Caco-2 (cell line): ENCODE measurements at regions of chr18 and their contacts with region 1.

Region 1: DNA sequence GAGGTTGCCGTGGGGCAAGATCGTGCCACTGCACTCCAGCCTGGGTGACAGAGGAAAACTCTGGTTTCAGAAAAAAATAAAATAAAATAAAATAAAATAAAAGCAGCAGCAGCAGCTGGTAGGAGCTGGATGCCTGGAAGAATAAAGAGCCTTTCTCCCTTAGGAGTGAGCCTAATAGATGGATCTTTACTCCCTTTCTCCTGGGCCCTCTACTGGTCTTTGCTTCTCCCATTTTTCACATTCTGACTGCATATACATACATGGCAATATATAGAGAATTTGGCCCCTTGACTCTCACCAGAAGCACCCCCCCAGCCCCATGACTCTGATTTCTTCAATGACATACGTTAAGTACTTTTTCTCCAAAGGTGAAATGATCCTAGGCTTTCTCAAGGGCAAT is 9.8 kb upstream of the MALT1 start:
- DNase-seq: peak in 1 of 2 experiments; percentile 9
- H3K4me3 ChIP-seq: no peak overlapping the region
- H3K4me3 Mint-ChIP-seq: no peak overlapping the region
- H3K27ac Mint-ChIP-seq: no peak overlapping the region
- H3K4me1 ChIP-seq: no peaks in the 10 kb centered on the region
- H3K4me1 Mint-ChIP-seq: peaks cover 9% of the 10 kb centered on the region
- H3K27me3 ChIP-seq: no peaks in the 10 kb centered on the region
- H3K27me3 Mint-ChIP-seq: no peaks in the 10 kb centered on the region
- CTCF ChIP-seq: peak; percentile 13 to 26

Region 2: DNA sequence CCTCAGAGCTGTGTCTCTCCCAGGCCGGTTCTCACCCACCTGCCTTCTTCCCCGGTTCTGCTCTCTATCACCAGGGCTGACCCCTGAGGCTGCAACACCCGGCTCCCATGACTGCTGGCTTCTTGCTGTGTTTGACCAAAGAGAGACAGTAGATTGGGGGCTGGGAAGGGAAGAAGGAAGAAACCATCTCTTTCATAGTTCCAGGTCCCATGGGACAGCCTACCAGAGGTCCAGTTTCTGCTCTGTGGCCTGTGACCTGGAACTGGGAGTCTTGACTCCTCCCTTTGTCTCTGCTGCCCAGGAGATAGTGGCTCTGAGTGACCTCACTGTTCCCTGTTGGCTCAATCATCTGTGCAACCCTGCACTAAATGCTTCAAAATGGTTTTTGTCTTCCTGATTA is 70.6 kb before region 1 on chr18:
- CTCF ChIA-PET with region 1: no interaction called
- POLR2A ChIA-PET with region 1: interaction called, 11 read pairs
- intact Hi-C with region 1: no loop called
- DNase-seq: peak in 1 of 2 experiments; percentile 1
- H3K4me3 ChIP-seq: no peak overlapping the region
- H3K4me3 Mint-ChIP-seq: no peak overlapping the region
- H3K27ac Mint-ChIP-seq: peak overlapping the region; percentile 76
- H3K4me1 ChIP-seq: peaks cover 19% of the 10 kb centered on the region
- H3K4me1 Mint-ChIP-seq: peaks cover 6% of the 10 kb centered on the region
- H3K27me3 ChIP-seq: no peaks in the 10 kb centered on the region
- H3K27me3 Mint-ChIP-seq: no peaks in the 10 kb centered on the region
- CTCF ChIP-seq: no peak

Region 3: GRCh38 chr18:58631301-58631700 is 30.1 kb before region 1 on chr18:
- CTCF ChIA-PET with region 1: no interaction called
- POLR2A ChIA-PET with region 1: no interaction called
- intact Hi-C with region 1: loop called (anchors 2 kb)
- DNase-seq: no peak
- H3K4me3 ChIP-seq: no peak overlapping the region
- H3K4me3 Mint-ChIP-seq: no peak overlapping the region
- H3K27ac Mint-ChIP-seq: peak overlapping the region; percentile 70
- H3K4me1 ChIP-seq: peaks cover 13% of the 10 kb centered on the region
- H3K4me1 Mint-ChIP-seq: peaks cover 8% of the 10 kb centered on the region
- H3K27me3 ChIP-seq: no peaks in the 10 kb centered on the region
- H3K27me3 Mint-ChIP-seq: no peaks in the 10 kb centered on the region
- CTCF ChIP-seq: no peak